Left colon (tissue), 2 donors: ENCODE measurements at regions of chr11 and their contacts with region 1.

Region 1: GRCh38 chr11:120511116-120511819 is at the start of gene GRIK4:
- DNase-seq: peak; percentile 62 to 84
- ATAC-seq: peak; percentile 91
- total RNA-seq, gene GRIK4: 0.15 to 0.20 TPM

Region 2: DNA sequence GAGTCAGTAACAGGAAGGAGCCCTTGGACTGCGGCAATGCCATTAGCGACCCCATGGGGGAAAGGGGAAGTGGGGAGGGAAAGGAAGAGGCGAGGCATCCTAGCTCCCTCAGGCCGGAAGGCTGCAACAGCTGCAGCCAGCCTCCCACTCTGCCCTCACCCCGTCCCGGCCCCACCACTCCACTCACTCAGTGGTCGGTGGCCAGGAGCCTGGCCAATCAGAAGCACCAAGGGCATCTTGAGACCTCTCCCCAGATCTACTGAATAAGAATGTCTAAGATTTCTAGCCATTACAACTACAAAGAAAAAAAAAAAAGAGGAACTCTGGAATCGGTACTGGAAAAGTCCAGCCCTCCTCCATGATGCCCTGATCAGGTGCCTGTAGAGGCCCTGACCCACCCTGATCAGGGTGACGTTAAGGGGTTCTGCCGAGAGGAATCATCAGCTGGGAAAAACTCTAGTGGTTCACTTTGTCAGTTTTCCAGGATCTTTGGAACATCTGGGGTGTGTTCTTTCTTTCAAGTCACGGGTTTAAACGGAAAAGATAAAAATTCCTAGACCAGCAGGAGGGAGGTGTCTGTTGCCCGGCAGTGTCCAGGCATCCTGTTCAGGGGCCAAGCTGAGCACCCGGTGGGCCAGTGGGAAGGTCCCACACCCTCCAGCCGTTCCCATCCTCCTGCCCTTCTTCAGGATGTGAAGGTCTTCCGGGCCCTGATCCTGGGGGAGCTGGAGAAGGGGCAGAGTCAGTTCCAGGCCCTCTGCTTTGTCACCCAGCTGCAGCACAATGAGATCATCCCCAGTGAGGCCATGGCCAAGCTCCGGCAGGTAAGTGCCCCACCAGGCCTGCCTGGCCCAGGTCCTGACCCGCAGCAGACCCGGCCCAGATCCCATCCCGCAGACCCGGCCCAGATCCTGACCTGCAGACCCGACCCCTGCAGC is 286.0 kb before region 1 on chr11:
- intact Hi-C with region 1: no loop called
- DNase-seq: no peak
- ATAC-seq: no peak

Region 3: GRCh38 chr11:120441592-120441991 is 69.7 kb before region 1 on chr11:
- intact Hi-C with region 1: no loop called
- DNase-seq: no peak
- ATAC-seq: no peak

Region 4: DNA sequence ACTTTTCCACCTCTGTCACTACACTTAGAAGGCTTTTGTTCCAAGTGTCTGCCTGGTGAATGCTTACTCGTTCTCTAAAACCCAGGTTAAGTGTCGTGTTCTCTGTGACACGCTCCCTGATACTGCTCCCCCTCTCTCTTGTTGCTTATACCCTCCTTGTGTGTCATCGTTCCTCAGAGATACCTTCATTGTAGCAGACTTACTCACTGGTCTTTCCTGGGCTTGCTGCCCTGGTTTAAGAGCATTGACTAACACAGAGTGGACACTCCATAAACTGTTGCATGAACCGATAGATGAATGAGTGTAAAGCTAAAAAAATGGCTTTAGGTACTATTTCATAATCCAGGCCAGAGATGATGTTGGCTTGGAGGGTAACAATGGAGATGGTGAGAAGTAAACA is 171.6 kb after region 1 on chr11:
- intact Hi-C with region 1: loop called (anchors 5 to 10 kb)
- DNase-seq: no peak
- ATAC-seq: no peak

Region 5: DNA sequence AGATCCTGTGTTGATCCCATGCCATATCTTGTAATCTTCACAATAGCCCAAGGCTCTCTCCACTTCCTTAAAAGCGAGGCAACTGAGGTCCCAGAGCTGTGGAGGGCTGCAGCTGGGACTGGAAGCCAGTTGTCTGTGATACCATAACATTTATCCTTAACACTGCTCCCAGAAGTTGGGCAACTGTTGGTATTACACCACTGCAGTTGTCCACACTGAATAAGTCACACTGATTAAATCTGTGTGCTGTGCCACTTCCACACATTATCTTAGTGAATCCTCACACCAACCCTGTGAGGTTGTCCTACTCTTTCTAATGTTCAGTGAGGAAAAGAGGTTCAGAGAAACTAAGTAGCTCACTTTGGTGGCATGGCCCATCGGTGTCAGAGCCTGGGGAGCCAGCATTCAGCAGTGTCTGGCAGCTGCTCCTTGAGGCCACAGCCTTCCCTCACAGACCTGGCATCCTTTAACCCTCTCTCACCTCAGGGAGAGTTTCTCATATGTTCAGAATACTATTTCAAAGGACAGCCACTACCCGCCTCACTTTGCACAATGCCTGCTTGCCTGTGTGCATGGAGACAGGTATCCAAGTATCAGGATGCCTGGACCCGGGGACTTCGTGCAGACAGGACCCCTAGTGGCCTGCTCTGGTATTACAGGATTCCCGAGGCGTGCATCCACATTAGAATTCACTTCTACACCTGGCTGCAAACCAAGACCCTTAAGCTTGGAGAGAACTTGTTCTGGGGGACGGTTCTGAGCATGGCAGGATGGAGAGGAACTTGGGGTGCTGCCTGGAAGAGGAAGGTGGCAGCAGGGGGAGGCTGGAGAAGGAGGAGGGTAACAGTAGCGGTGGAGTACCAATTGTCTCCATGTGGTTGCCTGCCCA is 290.8 kb after region 1 on chr11:
- intact Hi-C with region 1: loop called in 1 of 2 experiments (anchors 5 kb)
- DNase-seq: peak in 1 of 2 donors; percentile 72
- ATAC-seq: peak; percentile 67

Region 6: GRCh38 chr11:120952461-120953434 is 441.5 kb after region 1 on chr11:
- intact Hi-C with region 1: loop called in 1 of 2 experiments (anchors 5 kb)
- DNase-seq: peak; percentile 57 to 67
- ATAC-seq: peak; percentile 94